ENCODE measurements at regions of chr17 and their contacts with region 1.

Region 1: GRCh38 chr17:28726226-28727130 is at the start of gene TLCD1:
- DNase-seq: peak; percentile 86 to 97 (median 93)

Region 2: GRCh38 chr17:28743225-28744103 is 17.0 kb after region 1 on chr17 and contains the start of gene TRAF4:
- intact Hi-C with region 1: loop called (anchors 2 kb)
- DNase-seq: peak in 39 of 42 donors; percentile 53 to 87 (median 76)

Region 3: GRCh38 chr17:28902819-28903545 is 176.5 kb after region 1 on chr17 and contains the start of gene DHRS13:
- intact Hi-C with region 1: loop called (anchors 10 kb)
- DNase-seq: peak in 41 of 42 donors; percentile 52 to 93 (median 85)

Region 4: GRCh38 chr17:28951991-28952975 is 225.8 kb after region 1 on chr17:
- intact Hi-C with region 1: loop called (anchors 5 kb)
- DNase-seq: peak; percentile 93 to 100 (median 99)